Activated naive CD4-positive, alpha-beta T cell treated with anti-CD3 and anti-CD28 coated beads for 36 hours (primary cell): ENCODE measurements at regions of chr2 and their contacts with region 1.

Region 1: GRCh38 chr2:230411570-230412370 is 4.2 kb upstream of the SP100 start:
- DNase-seq: peak; percentile 68
- H3K4me3 Mint-ChIP-seq: peak overlapping the region; percentile 90
- H3K27ac Mint-ChIP-seq: peak overlapping the region; percentile 85
- H3K4me1 Mint-ChIP-seq: peaks cover 72% of the 10 kb centered on the region
- H3K27me3 Mint-ChIP-seq: no peaks in the 10 kb centered on the region

Region 2: GRCh38 chr2:229753330-229753729 is 658.4 kb before region 1 on chr2:
- CTCF ChIA-PET with region 1: no interaction called
- intact Hi-C with region 1: no loop called
- DNase-seq: no peak
- H3K4me3 Mint-ChIP-seq: no peak overlapping the region
- H3K27ac Mint-ChIP-seq: no peak overlapping the region
- H3K4me1 Mint-ChIP-seq: peaks cover 3% of the 10 kb centered on the region
- H3K27me3 Mint-ChIP-seq: no peaks in the 10 kb centered on the region

Region 3: GRCh38 chr2:229835596-229836283 is 576.0 kb before region 1 on chr2:
- CTCF ChIA-PET with region 1: no interaction called
- intact Hi-C with region 1: no loop called
- DNase-seq: no peak
- H3K4me3 Mint-ChIP-seq: no peak overlapping the region
- H3K27ac Mint-ChIP-seq: no peak overlapping the region
- H3K4me1 Mint-ChIP-seq: peaks cover 52% of the 10 kb centered on the region
- H3K27me3 Mint-ChIP-seq: no peaks in the 10 kb centered on the region

Region 4: GRCh38 chr2:230007931-230008707 is 403.7 kb before region 1 on chr2:
- CTCF ChIA-PET with region 1: no interaction called
- intact Hi-C with region 1: loop called (anchors 5 kb)
- DNase-seq: peak; percentile 95
- H3K4me3 Mint-ChIP-seq: no peak overlapping the region
- H3K27ac Mint-ChIP-seq: no peak overlapping the region
- H3K4me1 Mint-ChIP-seq: peaks cover 5% of the 10 kb centered on the region
- H3K27me3 Mint-ChIP-seq: no peaks in the 10 kb centered on the region

Region 5: GRCh38 chr2:230225486-230225885 is 186.3 kb before region 1 on chr2 and contains the start of gene SP140:
- CTCF ChIA-PET with region 1: no interaction called
- intact Hi-C with region 1: loop called (anchors 2 kb)
- DNase-seq: peak; percentile 87
- H3K4me3 Mint-ChIP-seq: peak within 1 kb of the TSS; percentile 81
- H3K27ac Mint-ChIP-seq: peak within 1 kb of the TSS; percentile 97
- H3K4me1 Mint-ChIP-seq: peaks cover 62% of the 10 kb centered on the region
- H3K27me3 Mint-ChIP-seq: no peaks in the 10 kb centered on the region
- total RNA-seq, gene SP140: 95.1 to 98.8 TPM

Region 6: GRCh38 chr2:230347659-230348305 is 64.0 kb before region 1 on chr2:
- CTCF ChIA-PET with region 1: no interaction called
- intact Hi-C with region 1: loop called (anchors 2 kb)
- DNase-seq: peak; percentile 76
- H3K4me3 Mint-ChIP-seq: no peak overlapping the region
- H3K27ac Mint-ChIP-seq: peak overlapping the region; percentile 85
- H3K4me1 Mint-ChIP-seq: peaks cover 71% of the 10 kb centered on the region
- H3K27me3 Mint-ChIP-seq: no peaks in the 10 kb centered on the region

Region 7: DNA sequence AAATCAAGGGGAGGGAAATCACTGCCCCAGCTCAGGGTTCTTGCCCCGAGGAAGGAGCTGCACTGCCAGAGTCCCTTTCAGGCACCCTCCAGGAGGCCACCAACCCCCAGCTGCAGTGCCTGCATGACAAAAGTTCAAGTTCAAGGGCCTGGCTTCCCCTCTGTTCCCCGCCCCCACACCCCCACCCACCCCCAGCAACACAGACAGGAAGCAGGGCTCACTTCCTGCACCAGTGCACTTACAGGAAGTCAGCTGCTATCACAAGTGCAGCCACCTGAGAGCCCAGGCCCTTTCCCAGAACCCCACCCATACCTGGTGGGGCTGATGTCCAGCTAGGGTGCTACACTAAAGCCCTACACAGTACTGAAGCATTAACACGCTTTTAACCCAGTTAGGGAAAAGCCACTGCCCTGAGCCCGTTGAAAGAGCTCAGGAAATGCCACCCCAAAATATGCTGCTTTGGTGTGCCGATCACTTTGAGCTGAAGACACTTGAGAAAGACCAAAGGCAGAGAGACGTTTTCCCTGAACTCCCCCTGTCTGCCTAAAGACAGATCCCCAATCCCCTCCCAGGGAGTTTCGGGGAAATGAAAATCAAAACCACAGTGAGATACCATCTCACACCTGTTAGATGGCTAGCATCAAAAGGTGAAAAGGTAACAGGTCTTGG is 190.9 kb after region 1 on chr2:
- CTCF ChIA-PET with region 1: interaction called, 3 read pairs
- intact Hi-C with region 1: loop called (anchors 5 kb)
- DNase-seq: peak; percentile 76
- H3K4me3 Mint-ChIP-seq: peak overlapping the region; percentile 8
- H3K27ac Mint-ChIP-seq: peak overlapping the region; percentile 89
- H3K4me1 Mint-ChIP-seq: peaks cover 38% of the 10 kb centered on the region
- H3K27me3 Mint-ChIP-seq: no peaks in the 10 kb centered on the region

Region 8: GRCh38 chr2:230668184-230668938 is 256.6 kb after region 1 on chr2:
- CTCF ChIA-PET with region 1: no interaction called
- intact Hi-C with region 1: no loop called
- DNase-seq: peak; percentile 79
- H3K4me3 Mint-ChIP-seq: no peak overlapping the region
- H3K27ac Mint-ChIP-seq: peak overlapping the region; percentile 88
- H3K4me1 Mint-ChIP-seq: peaks cover 67% of the 10 kb centered on the region
- H3K27me3 Mint-ChIP-seq: no peaks in the 10 kb centered on the region

Region 9: GRCh38 chr2:230712443-230713330 is 300.9 kb after region 1 on chr2 and contains the start of gene CAB39:
- CTCF ChIA-PET with region 1: no interaction called
- intact Hi-C with region 1: loop called (anchors 5 kb)
- DNase-seq: peak; percentile 84
- H3K4me3 Mint-ChIP-seq: peak within 1 kb of the TSS; percentile 90
- H3K27ac Mint-ChIP-seq: peak within 1 kb of the TSS; percentile 94
- H3K4me1 Mint-ChIP-seq: peaks cover 40% of the 10 kb centered on the region
- H3K27me3 Mint-ChIP-seq: no peaks in the 10 kb centered on the region
- total RNA-seq, gene CAB39: 86.6 to 97.5 TPM

Region 10: DNA sequence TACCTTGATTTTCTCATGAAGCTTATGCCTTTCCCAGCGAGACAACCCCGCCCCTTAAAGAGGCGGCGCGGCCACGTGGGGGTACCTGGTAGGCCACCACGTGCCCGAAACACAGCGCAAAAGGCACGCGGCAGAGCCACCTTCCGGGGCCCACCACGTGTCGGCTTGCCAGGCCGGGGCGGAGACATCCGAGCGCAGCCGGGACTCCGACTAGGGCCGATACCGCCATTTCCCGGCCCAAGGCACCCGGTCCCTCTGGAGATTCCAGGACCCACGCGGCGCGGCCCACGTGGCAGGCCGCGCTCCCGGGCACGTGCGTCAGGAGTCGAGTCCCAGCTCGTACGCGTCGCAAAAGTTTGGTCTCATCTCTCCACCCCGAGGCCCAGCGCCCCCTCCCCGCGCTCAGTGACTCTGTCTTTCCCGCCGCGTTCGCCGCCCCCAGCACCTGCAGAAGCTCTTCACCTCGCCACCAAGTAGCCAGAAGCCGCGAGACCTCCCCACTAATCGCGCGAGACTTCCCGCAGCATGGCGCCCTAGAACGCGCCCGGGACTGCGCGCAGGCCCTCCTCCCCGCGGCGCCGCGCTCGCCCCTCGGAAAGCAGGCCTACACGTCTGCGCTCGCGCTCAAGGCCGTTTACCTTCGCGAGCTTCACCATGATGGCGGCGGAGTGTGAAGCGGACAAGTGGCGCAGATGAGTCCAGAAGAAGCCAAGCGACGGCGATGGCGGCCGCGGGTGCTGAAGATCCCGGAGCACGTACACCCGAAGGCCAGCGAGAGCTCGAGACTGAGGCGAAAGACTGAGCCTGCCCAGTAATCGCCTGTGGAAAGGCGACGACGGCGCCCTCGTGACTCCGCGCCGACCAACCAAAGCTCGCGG is 1052.2 kb after region 1 on chr2 and contains the start of gene NCL:
- CTCF ChIA-PET with region 1: no interaction called
- intact Hi-C with region 1: loop called (anchors 10 kb)
- DNase-seq: peak; percentile 87
- H3K4me3 Mint-ChIP-seq: peak within 1 kb of the TSS; percentile 97
- H3K27ac Mint-ChIP-seq: peak within 1 kb of the TSS; percentile 98
- H3K4me1 Mint-ChIP-seq: peaks cover 46% of the 10 kb centered on the region
- H3K27me3 Mint-ChIP-seq: no peaks in the 10 kb centered on the region
- total RNA-seq, gene NCL: 908 to 911 TPM